ENCODE measurements at regions of chr10 and their contacts with region 1.

Region 1: GRCh38 chr10:21069929-21070700 is 173.0 kb upstream of the NEBL start:
- DNase-seq: no peak
- ATAC-seq: peak; percentile 65 to 72

Region 2: DNA sequence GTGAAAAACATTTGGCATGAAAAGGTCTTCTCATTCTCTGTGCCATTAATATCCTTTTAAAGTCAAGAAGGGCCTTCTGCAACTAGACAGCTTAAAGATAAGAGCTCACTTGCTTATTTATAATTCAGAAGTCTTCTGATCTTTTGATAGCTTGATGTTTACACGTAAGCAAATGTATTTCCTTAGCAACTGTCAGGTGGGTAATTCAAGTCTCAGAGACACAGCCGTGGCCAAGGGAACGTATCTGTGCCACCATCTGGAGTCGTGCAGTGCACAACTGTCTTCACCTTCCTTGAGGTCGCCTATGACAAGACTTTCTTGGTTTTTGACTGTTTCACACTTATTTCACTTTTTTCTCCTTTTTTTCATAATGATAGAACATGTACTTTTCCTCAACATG is 169.0 kb before region 1 on chr10:
- intact Hi-C with region 1: loop called in 1 of 2 experiments (anchors 5 kb)
- DNase-seq: no peak
- ATAC-seq: no peak